Posterior vena cava (tissue), 2 donors: ENCODE measurements at regions of chr10 and their contacts with region 1.

Region 1: DNA sequence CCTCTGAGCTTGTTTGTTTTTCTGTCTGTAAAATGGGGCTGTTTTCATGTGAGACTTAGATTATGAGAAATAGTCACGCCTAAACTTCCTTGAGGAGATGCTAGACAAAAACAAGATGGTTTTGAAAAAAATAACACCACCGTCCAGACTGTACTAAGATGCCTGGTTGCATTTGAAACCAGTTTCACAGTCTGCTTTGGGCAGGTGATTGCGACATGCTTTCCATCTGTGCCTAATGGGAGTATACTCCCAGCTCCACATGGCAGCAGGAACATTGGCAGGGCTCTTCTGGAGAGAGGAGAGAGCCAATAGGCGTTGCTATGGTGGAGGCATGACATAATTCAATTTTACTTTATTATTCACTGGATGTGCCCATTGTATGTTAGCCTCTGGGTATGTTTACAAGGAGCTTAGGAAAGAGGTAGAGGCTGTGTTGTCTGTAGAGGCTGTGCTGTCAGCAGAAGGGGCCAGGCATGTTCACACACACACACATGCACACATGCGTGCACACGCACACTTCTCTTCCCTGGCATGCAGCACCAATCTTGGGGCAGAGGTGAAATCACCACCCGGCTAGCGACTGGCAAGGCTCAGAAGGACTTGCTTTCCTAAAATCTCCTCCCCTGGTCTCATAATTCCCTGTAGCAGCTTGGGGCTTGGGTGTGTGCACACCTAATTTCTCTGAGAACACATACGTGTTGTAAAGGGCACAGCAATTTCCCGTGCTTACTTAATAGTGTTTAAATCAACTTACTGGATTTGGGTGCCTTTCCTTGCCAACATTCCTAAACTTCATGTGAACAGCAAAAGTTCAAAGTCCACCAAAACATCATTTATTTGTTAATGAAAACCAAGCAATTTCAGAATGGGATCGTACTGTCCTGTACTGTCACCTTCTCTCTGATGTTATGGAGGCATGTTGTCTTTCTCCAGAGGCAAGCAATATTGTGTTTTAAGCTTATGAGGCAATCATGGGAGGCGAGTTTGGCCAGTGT is 162.1 kb downstream of the TCF7L2 start:
- DNase-seq: no peak

Region 2: DNA sequence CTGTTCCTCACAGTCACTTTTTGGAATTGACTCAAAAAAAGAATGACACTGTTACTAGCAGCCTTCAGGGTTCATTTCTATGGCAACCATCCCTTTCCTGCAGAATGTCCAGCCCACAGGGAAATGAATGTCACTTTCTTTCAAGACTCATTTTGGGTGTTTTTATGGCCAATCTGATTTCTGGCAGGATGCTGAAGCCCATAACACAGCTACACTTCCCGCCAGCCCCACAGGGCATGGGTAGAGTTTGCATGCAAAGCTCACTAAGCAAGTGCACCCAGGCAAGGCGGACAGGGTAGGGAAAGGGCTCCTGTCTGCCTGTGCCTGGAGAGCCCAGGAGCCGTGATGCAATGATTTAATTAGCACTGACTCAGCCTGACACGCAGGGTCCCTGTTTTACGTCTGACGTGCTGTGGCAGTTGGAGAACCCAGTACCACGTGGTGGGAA is 902.4 kb before region 1 on chr10:
- intact Hi-C with region 1: no loop called
- DNase-seq: no peak

Region 3: GRCh38 chr10:113030453-113030852 is 81.7 kb before region 1 on chr10:
- intact Hi-C with region 1: loop called in 1 of 2 experiments (anchors 10 kb)
- DNase-seq: no peak

Region 4: DNA sequence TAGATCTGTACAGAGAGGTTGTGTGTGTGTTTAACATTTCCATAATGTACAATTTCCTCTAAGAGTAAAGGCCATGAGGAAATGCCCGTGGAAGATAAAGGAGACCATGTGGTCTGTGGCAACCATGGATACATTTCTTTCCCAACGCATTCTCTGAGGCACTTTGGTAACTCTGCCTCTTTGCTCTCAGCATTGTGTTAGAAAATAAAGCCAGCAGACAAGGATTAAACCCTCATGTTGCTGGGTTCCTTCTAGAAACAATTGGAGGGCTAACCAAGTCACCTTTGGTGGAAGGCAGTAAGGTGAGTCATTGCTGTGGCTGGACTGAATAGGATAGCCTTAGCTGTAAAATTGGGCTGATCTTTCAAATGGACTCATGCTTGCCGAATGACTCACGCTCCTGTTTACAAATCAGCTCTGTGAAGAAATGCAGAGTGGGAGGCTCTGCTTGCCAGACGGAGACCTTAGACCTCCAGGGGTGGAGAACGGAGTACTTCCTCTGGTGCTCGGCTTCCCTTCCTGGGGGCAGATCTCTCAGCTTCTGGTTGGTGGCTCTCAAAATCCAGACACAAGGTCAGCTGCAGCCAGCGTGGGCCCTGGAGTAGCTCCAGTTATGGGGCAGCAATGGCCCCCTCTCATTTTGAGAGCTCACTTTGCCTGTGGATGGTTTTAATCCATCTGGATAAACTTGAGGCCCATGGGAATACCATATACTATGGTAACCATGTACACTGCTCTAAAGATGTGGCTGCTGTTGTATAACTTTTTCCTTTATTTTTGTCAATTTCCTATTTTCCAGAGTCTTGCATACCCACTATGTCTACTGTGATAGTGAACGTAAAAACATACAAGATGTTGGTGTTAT is 24.8 kb before region 1 on chr10:
- intact Hi-C with region 1: no loop called
- DNase-seq: peak; percentile 85

Region 5: GRCh38 chr10:113131613-113132261 is 19.6 kb after region 1 on chr10:
- intact Hi-C with region 1: loop called in 1 of 2 experiments (anchors 2 kb)
- DNase-seq: no peak